ENCODE measurements at regions of chr10 and their contacts with region 1.

Region 1: DNA sequence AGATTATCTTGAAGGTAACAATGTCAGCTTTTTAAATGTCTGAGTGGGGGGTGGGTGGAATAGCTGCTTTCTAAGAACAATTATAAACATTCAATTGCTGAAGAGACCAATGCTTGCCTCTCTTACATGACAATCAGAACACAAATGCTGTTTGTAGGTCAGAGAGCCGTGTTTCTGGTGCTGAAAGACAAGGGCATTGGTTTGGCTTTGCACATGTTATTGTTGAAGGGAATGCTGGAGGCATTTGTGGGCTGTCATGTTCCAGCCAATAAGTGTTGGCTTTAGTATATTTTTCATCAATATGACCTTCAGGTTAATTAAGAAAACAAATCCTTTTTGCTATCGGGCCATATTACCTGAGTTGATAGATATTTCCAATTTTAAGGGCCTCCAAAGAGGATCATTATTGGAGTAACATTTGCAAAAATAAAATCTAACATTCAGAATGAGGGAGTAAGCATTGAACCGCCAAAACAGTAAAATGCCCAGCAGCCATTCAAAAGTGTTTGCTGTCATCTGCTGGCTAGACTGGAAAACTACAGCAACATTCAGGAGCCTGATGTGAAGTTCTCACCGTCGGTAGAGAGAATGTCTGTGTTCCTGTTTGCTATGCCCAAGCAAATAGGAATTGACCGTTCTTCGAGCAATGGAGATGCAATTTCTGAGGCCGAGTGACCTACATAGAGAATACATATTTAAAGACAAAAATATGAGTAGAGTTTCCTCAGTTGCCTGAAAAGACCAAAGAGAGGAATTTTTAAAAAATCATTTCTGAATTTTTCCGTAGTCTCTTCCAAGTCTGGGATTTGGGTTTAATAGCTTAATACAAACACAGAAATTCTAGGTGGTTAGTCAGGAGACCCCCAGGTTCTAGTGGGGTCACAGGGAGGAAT is 118.9 kb downstream of the APBB1IP start:
- DNase-seq: peak; percentile 26 to 63 (median 35)
- H3K4me3 ChIP-seq: no peak overlapping the region
- H3K27ac ChIP-seq: no peak overlapping the region
- H3K4me1 ChIP-seq: no peaks in the 10 kb centered on the region
- H3K27me3 ChIP-seq: no peaks in the 10 kb centered on the region
- CTCF ChIP-seq: peak; percentile 60 to 98 (median 84)
- POLR2A ChIP-seq: no peak

Region 2: GRCh38 chr10:25875556-25876165 is 681.3 kb before region 1 on chr10:
- intact Hi-C with region 1: loop called in 1 of 2 experiments (anchors 10 kb)
- DNase-seq: peak; percentile 65 to 90 (median 84)
- H3K4me3 ChIP-seq: no peak overlapping the region
- H3K27ac ChIP-seq: no peak overlapping the region
- H3K4me1 ChIP-seq: no peaks in the 10 kb centered on the region
- H3K27me3 ChIP-seq: no peaks in the 10 kb centered on the region
- CTCF ChIP-seq: peak; percentile 70 to 91 (median 76)
- POLR2A ChIP-seq: no peak

Region 3: GRCh38 chr10:26334932-26335573 is 221.9 kb before region 1 on chr10:
- intact Hi-C with region 1: loop called (anchors 10 kb)
- DNase-seq: peak; percentile 27 to 67 (median 32)
- H3K4me3 ChIP-seq: peak overlapping the region in 1 of 4 donors; percentile 28
- H3K27ac ChIP-seq: no peak overlapping the region
- H3K4me1 ChIP-seq: no peaks in the 10 kb centered on the region
- H3K27me3 ChIP-seq: no peaks in the 10 kb centered on the region
- CTCF ChIP-seq: peak in 5 of 6 experiments; percentile 55 to 81 (median 69)
- POLR2A ChIP-seq: no peak

Region 4: DNA sequence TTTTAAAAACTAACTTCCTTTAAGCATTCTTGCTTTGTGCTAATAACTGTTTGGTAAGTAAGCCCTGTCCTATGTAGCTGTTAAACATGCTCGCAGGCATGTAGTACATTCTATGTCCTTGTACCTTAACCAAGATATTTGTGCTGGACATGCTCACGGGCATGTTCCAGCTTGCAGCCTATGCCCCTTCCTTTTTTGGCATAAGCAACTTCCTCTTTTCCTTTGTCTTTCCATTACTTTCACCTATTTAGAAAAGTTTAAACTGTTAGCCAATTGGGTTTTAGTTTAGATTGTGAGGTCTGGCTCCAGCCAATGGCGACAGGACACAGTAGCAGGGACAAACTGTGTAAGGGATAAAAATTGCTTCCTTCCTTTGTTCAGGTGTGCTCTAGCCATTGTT is 133.3 kb before region 1 on chr10:
- intact Hi-C with region 1: no loop called
- DNase-seq: no peak
- H3K4me3 ChIP-seq: no peak overlapping the region
- H3K27ac ChIP-seq: no peak overlapping the region
- H3K4me1 ChIP-seq: no peaks in the 10 kb centered on the region
- H3K27me3 ChIP-seq: no peaks in the 10 kb centered on the region
- CTCF ChIP-seq: no peak
- POLR2A ChIP-seq: no peak